ENCODE measurements at regions of chr4 and their contacts with region 1.

Region 1: DNA sequence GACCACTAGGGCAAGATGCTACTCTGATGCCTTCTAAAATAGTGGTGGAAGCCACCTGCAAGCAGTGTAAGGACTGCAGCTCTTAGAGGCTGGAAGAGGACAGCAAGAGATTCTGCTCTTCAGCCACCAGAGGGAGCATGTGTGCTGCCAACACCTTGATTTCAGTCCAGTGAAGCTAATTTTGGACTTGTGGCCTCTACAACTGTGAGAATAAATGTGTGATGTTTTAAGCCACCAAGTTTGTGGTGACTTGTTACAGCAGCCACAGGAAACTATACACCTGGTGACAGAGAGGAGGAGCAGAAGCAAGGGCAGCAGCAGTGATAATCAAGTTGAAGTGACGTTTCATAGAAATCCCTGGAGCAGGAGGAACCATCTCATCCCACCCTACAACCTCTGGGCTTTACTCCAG is 55.9 kb downstream of the FGFBP1 start:
- DNase-seq: peak; percentile 79
- ATAC-seq: peak; percentile 97
- H3K4me3 ChIP-seq: no peak overlapping the region
- H3K27ac ChIP-seq: no peak overlapping the region
- H3K4me1 ChIP-seq: no peaks in the 10 kb centered on the region
- H3K27me3 ChIP-seq: no peaks in the 10 kb centered on the region
- CTCF ChIP-seq: peak; percentile 89 to 96 (median 95)
- POLR2A ChIP-seq: no peak
- RAD21 ChIP-seq: peak; percentile 98

Region 2: GRCh38 chr4:15610855-15611254 is 271.8 kb before region 1 on chr4:
- CTCF ChIA-PET with region 1: no interaction called
- POLR2A ChIA-PET with region 1: no interaction called
- RAD21 ChIA-PET with region 1: no interaction called
- intact Hi-C with region 1: no loop called
- DNase-seq: no peak
- ATAC-seq: no peak
- H3K4me3 ChIP-seq: no peak overlapping the region
- H3K27ac ChIP-seq: no peak overlapping the region
- H3K4me1 ChIP-seq: no peaks in the 10 kb centered on the region
- H3K27me3 ChIP-seq: no peaks in the 10 kb centered on the region
- CTCF ChIP-seq: no peak
- POLR2A ChIP-seq: no peak
- RAD21 ChIP-seq: no peak

Region 3: DNA sequence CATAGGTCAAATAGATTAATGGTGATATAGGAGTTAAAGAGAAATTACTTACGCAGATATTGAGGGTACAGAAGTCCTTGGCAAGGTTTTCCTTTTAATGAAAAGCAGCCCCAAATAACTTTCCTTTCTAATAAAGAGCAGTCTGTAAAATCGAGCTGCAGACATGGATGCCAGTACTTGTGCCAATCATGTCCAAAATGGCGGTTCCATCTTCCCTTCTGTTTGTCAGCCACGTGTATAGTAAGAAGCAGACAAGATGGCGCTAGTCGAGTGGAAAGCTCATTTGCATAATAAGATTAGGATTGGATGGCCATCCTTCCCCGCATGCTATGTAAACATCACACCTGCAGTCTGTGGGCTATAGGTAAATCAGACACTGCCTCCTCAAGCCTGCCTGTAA is 12.6 kb before region 1 on chr4:
- CTCF ChIA-PET with region 1: interaction called, 10 read pairs
- POLR2A ChIA-PET with region 1: no interaction called
- RAD21 ChIA-PET with region 1: no interaction called
- intact Hi-C with region 1: no loop called
- DNase-seq: no peak
- ATAC-seq: no peak
- H3K4me3 ChIP-seq: no peak overlapping the region
- H3K27ac ChIP-seq: no peak overlapping the region
- H3K4me1 ChIP-seq: no peaks in the 10 kb centered on the region
- H3K27me3 ChIP-seq: no peaks in the 10 kb centered on the region
- CTCF ChIP-seq: no peak
- POLR2A ChIP-seq: no peak
- RAD21 ChIP-seq: no peak

Region 4: GRCh38 chr4:15920723-15921591 is 38.3 kb after region 1 on chr4:
- CTCF ChIA-PET with region 1: interaction called, 10 read pairs
- POLR2A ChIA-PET with region 1: no interaction called
- RAD21 ChIA-PET with region 1: no interaction called
- intact Hi-C with region 1: no loop called
- DNase-seq: peak; percentile 89
- ATAC-seq: peak; percentile 95
- H3K4me3 ChIP-seq: peak overlapping the region in 1 of 2 experiments; percentile 3; a peak in 1 of 4 replicates
- H3K27ac ChIP-seq: peak overlapping the region; percentile 51; the same call in 1 of the 2 replicates
- H3K4me1 ChIP-seq: peaks cover 12 to 37% of the 10 kb centered on the region in 2 experiments
- H3K27me3 ChIP-seq: no peaks in the 10 kb centered on the region
- CTCF ChIP-seq: no peak
- POLR2A ChIP-seq: no peak
- RAD21 ChIP-seq: no peak

Region 5: DNA sequence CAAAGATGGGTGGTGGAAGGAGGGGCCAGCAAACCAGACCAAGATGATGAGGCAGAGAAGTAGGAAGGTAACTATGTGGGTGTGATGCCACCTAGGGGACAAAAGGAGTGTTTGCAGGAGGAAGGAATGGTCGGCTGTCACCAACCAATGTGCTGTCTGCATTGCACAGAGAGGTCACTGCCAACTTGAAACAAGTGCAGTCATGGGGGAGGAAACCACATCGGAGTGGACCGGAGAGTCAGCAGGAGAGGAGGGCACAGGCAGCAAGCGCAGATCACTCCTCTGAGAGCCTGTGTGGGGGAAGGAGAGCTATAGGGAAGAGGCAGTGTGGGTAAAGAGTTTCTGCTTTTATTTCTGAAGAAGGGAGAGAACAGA is 118.8 kb after region 1 on chr4:
- CTCF ChIA-PET with region 1: interaction called, 4 read pairs
- POLR2A ChIA-PET with region 1: no interaction called
- RAD21 ChIA-PET with region 1: no interaction called
- intact Hi-C with region 1: loop called (anchors 1 kb)
- DNase-seq: peak; percentile 61
- ATAC-seq: peak; percentile 97
- H3K4me3 ChIP-seq: no peak overlapping the region
- H3K27ac ChIP-seq: no peak overlapping the region
- H3K4me1 ChIP-seq: peaks cover 0 to 5% of the 10 kb centered on the region in 2 experiments; a peak in 1 of 4 replicates
- H3K27me3 ChIP-seq: no peaks in the 10 kb centered on the region
- CTCF ChIP-seq: peak; percentile 75 to 91 (median 81)
- POLR2A ChIP-seq: no peak
- RAD21 ChIP-seq: peak; percentile 86